B cell (primary cell): ENCODE measurements at regions of chr3 and their contacts with region 1.

Region 1: GRCh38 chr3:122004991-122005565 is 17.0 kb downstream of the ILDR1 start:
- DNase-seq: peak; percentile 68
- ATAC-seq: peak; percentile 50
- H3K4me3 ChIP-seq: no peak overlapping the region
- H3K4me3 Mint-ChIP-seq: peak overlapping the region; percentile 78
- H3K27ac ChIP-seq: peak overlapping the region in 1 of 2 donors; percentile 87
- H3K27ac Mint-ChIP-seq: peak overlapping the region; percentile 87
- H3K4me1 ChIP-seq: peaks cover 35 to 50% of the 10 kb centered on the region in 2 donors
- H3K4me1 Mint-ChIP-seq: peaks cover 55% of the 10 kb centered on the region
- H3K27me3 ChIP-seq: no peaks in the 10 kb centered on the region
- H3K27me3 Mint-ChIP-seq: no peaks in the 10 kb centered on the region
- CTCF ChIP-seq: no peak

Region 2: DNA sequence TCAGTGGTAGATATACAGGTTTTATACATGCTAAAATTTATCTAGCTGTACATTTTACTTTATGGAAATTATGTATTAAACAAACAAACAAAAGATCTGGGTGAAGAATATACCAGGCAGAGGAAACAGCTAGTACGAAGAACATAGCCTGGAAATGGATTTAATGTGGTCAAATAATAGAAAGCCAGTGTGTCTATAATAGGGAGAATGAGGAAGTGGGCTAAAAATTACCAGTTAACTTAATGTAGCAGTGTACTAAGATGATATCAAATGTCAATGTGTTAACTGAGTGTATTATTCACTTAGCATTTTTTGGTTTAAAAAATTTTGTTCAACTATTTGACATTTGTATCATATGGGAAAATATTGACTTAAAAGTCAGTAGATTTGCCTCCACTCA is 133.6 kb before region 1 on chr3:
- CTCF ChIA-PET with region 1: no interaction called
- POLR2A ChIA-PET with region 1: no interaction called
- intact Hi-C with region 1: loop called (anchors 5 kb)
- DNase-seq: peak; percentile 11
- ATAC-seq: peak; percentile 41
- H3K4me3 ChIP-seq: no peak overlapping the region
- H3K4me3 Mint-ChIP-seq: no peak overlapping the region
- H3K27ac ChIP-seq: no peak overlapping the region
- H3K27ac Mint-ChIP-seq: peak overlapping the region; percentile 16
- H3K4me1 ChIP-seq: peaks cover 6 to 28% of the 10 kb centered on the region in 2 donors
- H3K4me1 Mint-ChIP-seq: peaks cover 43% of the 10 kb centered on the region
- H3K27me3 ChIP-seq: no peaks in the 10 kb centered on the region
- H3K27me3 Mint-ChIP-seq: no peaks in the 10 kb centered on the region
- CTCF ChIP-seq: no peak

Region 3: GRCh38 chr3:122021811-122022401 is 16.8 kb after region 1 on chr3 and contains the start of gene ILDR1:
- CTCF ChIA-PET with region 1: interaction called, 3 read pairs
- POLR2A ChIA-PET with region 1: interaction called, 4 read pairs
- intact Hi-C with region 1: loop called (anchors 2 kb)
- DNase-seq: peak; percentile 70
- ATAC-seq: peak; percentile 86
- H3K4me3 ChIP-seq: peak within 1 kb of the TSS in 4 of 5 experiments; percentile 41 to 62 (median 52)
- H3K4me3 Mint-ChIP-seq: peak within 1 kb of the TSS; percentile 85
- H3K27ac ChIP-seq: peak within 1 kb of the TSS in 1 of 2 donors; percentile 33
- H3K27ac Mint-ChIP-seq: peak within 1 kb of the TSS; percentile 64
- H3K4me1 ChIP-seq: peaks cover 28 to 34% of the 10 kb centered on the region in 2 donors
- H3K4me1 Mint-ChIP-seq: peaks cover 41% of the 10 kb centered on the region
- H3K27me3 ChIP-seq: no peaks in the 10 kb centered on the region
- H3K27me3 Mint-ChIP-seq: no peaks in the 10 kb centered on the region
- CTCF ChIP-seq: no peak
- total RNA-seq, gene ILDR1: 1.6 and 1.9 TPM in 2 replicates

Region 4: DNA sequence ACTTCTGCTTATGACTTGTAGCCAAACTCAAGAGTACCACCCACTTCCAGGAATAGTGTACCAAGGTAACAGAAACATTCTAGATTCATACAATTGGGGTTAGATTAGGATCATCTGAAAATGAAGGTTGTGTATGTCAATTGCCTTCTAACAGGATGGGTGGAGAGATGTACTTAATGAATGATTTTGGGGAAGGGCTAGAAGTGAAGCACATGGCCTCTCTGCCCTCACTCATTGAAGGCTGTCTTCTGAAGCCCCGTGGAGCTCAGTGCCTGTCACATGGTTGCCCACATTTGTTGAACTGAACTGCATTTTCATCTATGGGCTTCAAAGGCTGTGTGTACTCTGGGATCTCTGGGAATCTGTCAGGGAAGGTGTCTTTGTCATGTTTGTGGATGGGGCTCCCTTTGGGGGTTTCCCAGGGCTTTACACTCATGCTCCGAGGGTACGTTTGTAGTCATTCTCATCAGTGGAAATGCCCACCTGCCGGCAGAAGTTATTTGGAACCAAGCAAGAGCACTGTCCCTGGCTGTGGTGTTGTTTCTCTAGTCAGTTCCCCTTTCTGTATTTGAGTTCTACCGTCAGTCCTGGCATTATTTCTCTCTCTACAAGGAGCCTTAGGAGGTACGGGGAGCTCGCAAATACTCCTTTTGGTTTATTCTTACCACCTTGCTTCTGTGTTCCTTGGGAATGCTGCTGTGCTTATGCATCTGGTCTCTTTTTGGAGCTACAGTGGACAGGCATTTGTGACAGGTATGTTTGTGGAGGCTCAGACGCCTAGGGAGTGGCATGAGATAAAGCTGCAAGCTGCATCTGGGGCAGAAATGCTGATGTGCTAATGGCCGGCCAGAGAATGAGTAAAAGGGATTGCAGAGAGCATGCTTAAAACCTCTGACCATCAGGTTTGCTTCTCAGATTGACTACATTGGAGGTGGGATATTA is 72.5 kb after region 1 on chr3:
- CTCF ChIA-PET with region 1: interaction called, 19 read pairs
- POLR2A ChIA-PET with region 1: interaction called, 3 read pairs
- intact Hi-C with region 1: loop called (anchors 2 kb)
- DNase-seq: peak; percentile 77
- ATAC-seq: peak; percentile 72
- H3K4me3 ChIP-seq: peak overlapping the region; percentile 44 to 95 (median 76)
- H3K4me3 Mint-ChIP-seq: peak overlapping the region; percentile 94
- H3K27ac ChIP-seq: peak overlapping the region; percentile 64 to 81
- H3K27ac Mint-ChIP-seq: peak overlapping the region; percentile 96
- H3K4me1 ChIP-seq: peaks cover 76 to 83% of the 10 kb centered on the region in 2 donors
- H3K4me1 Mint-ChIP-seq: peaks cover 90% of the 10 kb centered on the region
- H3K27me3 ChIP-seq: no peaks in the 10 kb centered on the region
- H3K27me3 Mint-ChIP-seq: no peaks in the 10 kb centered on the region
- CTCF ChIP-seq: peak; percentile 33

Region 5: DNA sequence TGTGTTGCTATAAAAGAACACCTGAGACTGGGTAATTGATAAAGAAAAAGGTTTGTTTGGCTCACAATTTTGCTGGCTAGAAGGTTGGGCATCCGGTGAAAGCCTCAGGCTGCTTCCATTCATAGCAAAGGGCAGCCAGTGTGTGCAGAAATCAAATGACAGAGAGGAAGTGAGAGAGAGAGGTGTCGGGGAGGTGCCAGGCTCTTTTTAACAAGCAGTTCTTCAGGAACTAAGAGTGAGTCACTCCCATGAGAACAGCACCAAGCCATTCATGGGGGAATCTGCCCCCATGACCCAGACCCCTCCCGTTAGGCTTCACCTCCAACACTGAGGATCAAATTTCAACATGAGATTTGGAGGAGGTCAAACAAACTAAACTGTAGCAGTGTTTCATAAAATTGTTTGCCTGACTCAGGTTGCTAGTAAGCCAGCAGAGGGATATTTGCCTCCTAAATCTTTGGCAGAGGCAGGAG is 567.9 kb after region 1 on chr3:
- CTCF ChIA-PET with region 1: no interaction called
- POLR2A ChIA-PET with region 1: no interaction called
- intact Hi-C with region 1: loop called (anchors 5 kb)
- DNase-seq: peak; percentile 73
- ATAC-seq: peak; percentile 22
- H3K4me3 ChIP-seq: no peak overlapping the region
- H3K4me3 Mint-ChIP-seq: peak overlapping the region; percentile 20
- H3K27ac ChIP-seq: peak overlapping the region; percentile 66 to 78
- H3K27ac Mint-ChIP-seq: peak overlapping the region; percentile 93
- H3K4me1 ChIP-seq: peaks cover 65 to 73% of the 10 kb centered on the region in 2 donors
- H3K4me1 Mint-ChIP-seq: peaks cover 75% of the 10 kb centered on the region
- H3K27me3 ChIP-seq: no peaks in the 10 kb centered on the region
- H3K27me3 Mint-ChIP-seq: no peaks in the 10 kb centered on the region
- CTCF ChIP-seq: no peak